HepG2 (cell line): ENCODE measurements at regions of chr4 and their contacts with region 1.

Region 1: GRCh38 chr4:2468445-2469192 is at the start of gene RNF4:
- DNase-seq: peak; percentile 93
- ATAC-seq: peak; percentile 91
- H3K4me3 ChIP-seq: peak within 1 kb of the TSS; percentile 84 to 93 (median 86)
- H3K27ac ChIP-seq: peak within 1 kb of the TSS; percentile 93
- H3K4me1 ChIP-seq: peaks cover 44% of the 10 kb centered on the region
- H3K27me3 ChIP-seq: no peaks in the 10 kb centered on the region; a peak in 1 of 5 replicates
- CTCF ChIP-seq: no peak
- EP300 ChIP-seq: no peak
- POLR2A ChIP-seq: peak in 1 of 2 experiments; percentile 80; a peak in 2 of 4 replicates
- RAD21 ChIP-seq: no peak
- total RNA-seq, gene RNF4: 38.1 and 46.7 TPM in 2 replicates

Region 2: GRCh38 chr4:2241410-2242353 is 226.9 kb before region 1 on chr4 and contains the starts of genes HAUS3 and POLN:
- CTCF ChIA-PET with region 1: no interaction called
- POLR2A ChIA-PET with region 1: interaction called, 5 read pairs
- in situ Hi-C with region 1: no loop called
- intact Hi-C with region 1: loop called (anchors 10 kb)
- DNase-seq: peak; percentile 90
- ATAC-seq: peak; percentile 87
- H3K4me3 ChIP-seq: peak within 1 kb of the TSS; percentile 67 to 93 (median 76)
- H3K27ac ChIP-seq: peak within 1 kb of the TSS; percentile 77
- H3K4me1 ChIP-seq: peaks cover 70% of the 10 kb centered on the region
- H3K27me3 ChIP-seq: no peaks in the 10 kb centered on the region
- CTCF ChIP-seq: no peak; the same call in 1 of the 2 replicates
- EP300 ChIP-seq: no peak
- POLR2A ChIP-seq: peak in 1 of 2 experiments; percentile 55; a peak in 1 of 4 replicates
- RAD21 ChIP-seq: no peak
- total RNA-seq, gene HAUS3: 12.6 and 16.3 TPM in 2 replicates
- total RNA-seq, gene POLN: 0.60 and 0.93 TPM in 2 replicates

Region 3: GRCh38 chr4:2536193-2537010 is 67.8 kb after region 1 on chr4 and contains the start of gene FAM193A:
- CTCF ChIA-PET with region 1: no interaction called
- POLR2A ChIA-PET with region 1: interaction called, 25 read pairs
- in situ Hi-C with region 1: no loop called
- intact Hi-C with region 1: loop called (anchors 2 kb)
- DNase-seq: peak; percentile 96
- ATAC-seq: peak; percentile 90
- H3K4me3 ChIP-seq: peak within 1 kb of the TSS; percentile 89 to 92 (median 91)
- H3K27ac ChIP-seq: peak within 1 kb of the TSS; percentile 86
- H3K4me1 ChIP-seq: peaks cover 20% of the 10 kb centered on the region
- H3K27me3 ChIP-seq: no peaks in the 10 kb centered on the region; a peak in 1 of 5 replicates
- CTCF ChIP-seq: no peak
- EP300 ChIP-seq: peak in 1 of 2 experiments; percentile 47; a peak in 1 of 4 replicates
- POLR2A ChIP-seq: peak; percentile 42 to 68; a peak in 3 of 4 replicates
- RAD21 ChIP-seq: no peak
- total RNA-seq, gene FAM193A: 7.2 and 8.7 TPM in 2 replicates